ENCODE measurements at regions of chr6 and their contacts with region 1.

Region 1: DNA sequence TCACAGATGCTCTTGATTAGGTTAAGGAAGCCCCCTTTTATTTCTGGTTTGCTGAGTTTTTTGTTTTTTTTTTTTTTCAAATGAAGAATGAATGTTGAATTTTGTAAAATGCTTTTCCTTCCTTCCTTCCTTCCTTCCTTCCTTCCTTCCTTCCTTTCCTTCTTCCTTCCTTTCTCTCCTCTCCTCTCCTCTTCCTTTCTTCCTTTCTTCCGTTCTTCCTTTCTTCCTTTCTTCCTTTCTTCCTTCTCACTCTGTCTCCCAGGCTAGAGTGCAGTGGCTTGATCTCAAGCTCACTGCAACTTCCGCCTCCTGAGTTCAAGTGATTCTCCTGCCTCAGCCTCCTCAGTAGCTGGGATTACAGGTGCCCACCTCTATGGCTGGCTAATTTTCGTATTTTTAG is 158.2 kb downstream of the ZFAND3 start:
- DNase-seq: no peak
- ATAC-seq: no peak
- H3K4me3 ChIP-seq: no peak overlapping the region
- H3K4me3 Mint-ChIP-seq: no peak overlapping the region
- H3K27ac ChIP-seq: no peak overlapping the region
- H3K27ac Mint-ChIP-seq: no peak overlapping the region
- H3K4me1 ChIP-seq: peaks cover 0 to 6% of the 10 kb centered on the region in 2 experiments
- H3K4me1 Mint-ChIP-seq: peaks cover 51 to 57% (median 55%) of the 10 kb centered on the region in 3 donors
- H3K27me3 ChIP-seq: no peaks in the 10 kb centered on the region
- H3K27me3 Mint-ChIP-seq: no peaks in the 10 kb centered on the region

Region 2: DNA sequence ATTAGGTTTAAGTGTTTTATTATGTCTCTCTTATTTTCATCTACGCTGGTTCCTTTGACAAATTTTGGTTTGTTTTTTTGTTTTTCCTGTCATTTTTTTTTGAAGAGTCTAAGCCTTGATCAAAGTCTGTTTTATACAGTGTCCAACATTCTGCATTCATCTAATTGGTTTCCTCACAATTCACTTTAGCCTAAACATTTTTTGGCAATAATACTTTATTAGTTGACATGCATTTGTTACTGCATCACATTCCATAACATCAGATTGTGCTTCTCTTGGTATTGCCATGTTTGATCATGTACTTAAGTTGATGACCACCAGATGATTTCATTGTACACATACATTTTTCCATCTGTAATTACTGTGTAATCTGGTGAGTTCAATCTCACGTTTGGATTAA is 15.0 kb after region 1 on chr6:
- CTCF ChIA-PET with region 1: no interaction called
- POLR2A ChIA-PET with region 1: interaction called in 1 of 2 experiments, 12 read pairs
- DNase-seq: no peak
- ATAC-seq: no peak
- H3K4me3 ChIP-seq: no peak overlapping the region
- H3K4me3 Mint-ChIP-seq: no peak overlapping the region
- H3K27ac ChIP-seq: no peak overlapping the region
- H3K27ac Mint-ChIP-seq: no peak overlapping the region
- H3K4me1 ChIP-seq: no peaks in the 10 kb centered on the region
- H3K4me1 Mint-ChIP-seq: peaks cover 58 to 63% (median 62%) of the 10 kb centered on the region in 3 donors
- H3K27me3 ChIP-seq: no peaks in the 10 kb centered on the region
- H3K27me3 Mint-ChIP-seq: no peaks in the 10 kb centered on the region

Region 3: GRCh38 chr6:38234934-38235682 is 257.4 kb after region 1 on chr6:
- CTCF ChIA-PET with region 1: no interaction called
- POLR2A ChIA-PET with region 1: no interaction called
- DNase-seq: no peak
- ATAC-seq: no peak
- H3K4me3 ChIP-seq: no peak overlapping the region
- H3K4me3 Mint-ChIP-seq: no peak overlapping the region
- H3K27ac ChIP-seq: no peak overlapping the region
- H3K27ac Mint-ChIP-seq: no peak overlapping the region
- H3K4me1 ChIP-seq: no peaks in the 10 kb centered on the region
- H3K4me1 Mint-ChIP-seq: peaks cover 0 to 5% (median 5%) of the 10 kb centered on the region in 3 donors
- H3K27me3 ChIP-seq: no peaks in the 10 kb centered on the region
- H3K27me3 Mint-ChIP-seq: no peaks in the 10 kb centered on the region